K562 (cell line): ENCODE measurements at regions of chr6 and their contacts with region 1.

Region 1: GRCh38 chr6:159862103-159862502 is 28.7 kb upstream of the MAS1 start:
- DNase-seq: no peak
- ATAC-seq: no peak
- H3K4me3 ChIP-seq: no peak overlapping the region
- H3K27ac ChIP-seq: no peak overlapping the region
- H3K4me1 ChIP-seq: peaks cover 0 to 9% of the 10 kb centered on the region in 2 experiments; a peak in 1 of 5 replicates
- H3K27me3 ChIP-seq: peaks cover 8 to 21% of the 10 kb centered on the region in 2 experiments; a peak in 4 of 5 replicates
- CTCF ChIP-seq: no peak
- EP300 ChIP-seq: no peak
- POLR2A ChIP-seq: no peak
- RAD21 ChIP-seq: no peak

Region 2: DNA sequence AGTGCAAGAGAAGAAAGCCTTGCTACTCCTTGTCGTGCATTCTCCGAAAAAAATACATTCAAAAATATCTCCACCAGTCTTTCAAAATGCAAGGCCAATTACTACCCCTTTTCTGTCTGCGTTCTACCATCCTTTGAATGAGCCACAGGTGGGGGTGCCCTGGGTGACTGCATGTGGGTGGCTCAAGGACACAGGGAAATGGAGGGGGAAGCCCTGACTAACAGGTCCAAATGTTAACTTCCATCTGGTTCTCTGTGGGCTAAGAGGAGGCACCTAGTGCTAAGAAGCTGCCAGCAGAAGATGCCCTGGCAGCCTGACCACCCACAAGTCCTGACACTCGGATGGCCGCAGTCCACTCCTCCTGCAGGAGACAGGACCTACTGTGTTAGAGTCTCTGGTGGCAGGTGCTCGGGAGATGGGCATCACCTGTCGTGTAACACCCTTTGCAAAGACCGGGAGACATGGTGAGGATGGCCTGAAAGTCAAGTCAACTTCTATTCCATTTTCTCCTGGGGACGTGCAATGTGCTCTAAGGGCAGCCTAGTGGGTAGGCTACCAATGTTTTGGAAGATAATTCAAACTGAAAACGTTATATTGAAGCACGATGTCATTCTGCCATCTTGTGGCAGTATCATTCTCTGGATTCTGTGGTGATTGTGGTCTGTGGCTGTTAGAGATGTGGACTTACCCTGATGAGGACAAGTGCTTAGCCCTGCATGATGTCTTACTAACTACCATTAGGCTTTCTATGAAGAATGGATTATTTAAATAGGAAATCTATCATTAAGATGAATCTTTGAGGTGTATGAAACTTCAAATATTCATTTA is 79.4 kb after region 1 on chr6:
- CTCF ChIA-PET with region 1: interaction called, 8 read pairs
- POLR2A ChIA-PET with region 1: no interaction called
- in situ Hi-C with region 1: no loop called
- intact Hi-C with region 1: loop called (anchors 1 kb)
- DNase-seq: peak in 3 of 4 experiments; percentile 18 to 56 (median 25)
- ATAC-seq: peak; percentile 89
- H3K4me3 ChIP-seq: no peak overlapping the region
- H3K27ac ChIP-seq: no peak overlapping the region
- H3K4me1 ChIP-seq: no peaks in the 10 kb centered on the region; a peak in 1 of 5 replicates
- H3K27me3 ChIP-seq: peaks cover 12 to 24% of the 10 kb centered on the region in 2 experiments; a peak in 4 of 5 replicates
- CTCF ChIP-seq: peak; percentile 39 to 75 (median 43); a peak in 4 of 6 replicates
- EP300 ChIP-seq: no peak
- POLR2A ChIP-seq: no peak
- RAD21 ChIP-seq: peak; percentile 72 to 85

Region 3: DNA sequence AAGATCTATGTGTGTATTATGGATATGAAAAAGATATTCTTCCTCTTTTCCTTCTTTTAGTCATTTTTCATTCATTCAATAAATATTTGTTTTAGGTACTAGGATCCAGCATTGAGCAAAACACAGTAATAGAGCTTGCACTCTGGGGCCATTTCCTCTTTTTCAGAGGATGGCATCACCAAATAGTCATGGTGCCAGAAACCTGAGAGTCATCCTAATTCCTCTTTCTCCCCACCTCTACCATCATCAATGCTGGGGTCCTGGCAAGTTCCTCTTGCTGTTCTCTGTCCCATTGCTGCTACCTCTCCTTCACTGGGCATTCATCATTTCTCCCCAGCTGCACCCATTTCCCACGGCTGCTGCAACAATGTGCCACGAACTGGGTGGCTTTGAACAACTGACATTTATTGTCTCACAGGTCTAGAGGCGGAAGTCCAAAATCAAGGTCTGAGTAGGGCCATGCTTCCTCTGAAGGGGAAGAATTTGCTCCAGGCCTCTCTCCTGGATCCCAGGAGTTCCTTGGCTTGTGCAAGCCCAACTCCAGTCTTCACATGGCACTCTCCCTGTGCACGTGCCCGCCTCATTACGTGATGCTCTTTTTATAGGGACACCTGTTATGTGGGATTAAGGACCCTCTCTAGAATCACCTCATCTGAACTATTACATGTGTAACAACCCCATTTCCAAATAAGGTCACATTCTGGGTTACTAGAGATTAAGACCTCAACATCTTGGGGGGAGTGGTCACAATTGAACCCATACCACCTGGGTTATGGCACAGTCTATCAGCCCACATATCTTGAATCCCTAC is 97.3 kb after region 1 on chr6:
- CTCF ChIA-PET with region 1: no interaction called
- POLR2A ChIA-PET with region 1: no interaction called
- in situ Hi-C with region 1: no loop called
- intact Hi-C with region 1: no loop called
- DNase-seq: no peak
- ATAC-seq: no peak; the same call in 2 of the 3 replicates
- H3K4me3 ChIP-seq: no peak overlapping the region
- H3K27ac ChIP-seq: peak overlapping the region; percentile 13; the same call in 1 of the 3 replicates
- H3K4me1 ChIP-seq: peaks cover 0 to 10% of the 10 kb centered on the region in 2 experiments; a peak in 3 of 5 replicates
- H3K27me3 ChIP-seq: no peaks in the 10 kb centered on the region; a peak in 1 of 5 replicates
- CTCF ChIP-seq: no peak
- EP300 ChIP-seq: no peak
- POLR2A ChIP-seq: no peak
- RAD21 ChIP-seq: no peak

Region 4: GRCh38 chr6:160102956-160103824 is 241.1 kb after region 1 on chr6:
- CTCF ChIA-PET with region 1: no interaction called
- POLR2A ChIA-PET with region 1: no interaction called
- in situ Hi-C with region 1: no loop called
- intact Hi-C with region 1: loop called (anchors 5 kb)
- DNase-seq: peak; percentile 39 to 59 (median 47)
- ATAC-seq: peak; percentile 30
- H3K4me3 ChIP-seq: no peak overlapping the region
- H3K27ac ChIP-seq: no peak overlapping the region
- H3K4me1 ChIP-seq: peaks cover 32% of the 10 kb centered on the region in 2 experiments
- H3K27me3 ChIP-seq: no peaks in the 10 kb centered on the region; a peak in 1 of 5 replicates
- CTCF ChIP-seq: peak; percentile 54 to 75 (median 62)
- EP300 ChIP-seq: no peak
- POLR2A ChIP-seq: no peak
- RAD21 ChIP-seq: peak in 1 of 2 experiments; percentile 63; a peak in 3 of 4 replicates

Region 5: GRCh38 chr6:160137989-160138835 is 276.1 kb after region 1 on chr6:
- CTCF ChIA-PET with region 1: interaction called, 8 read pairs
- POLR2A ChIA-PET with region 1: interaction called, 3 read pairs
- in situ Hi-C with region 1: no loop called
- intact Hi-C with region 1: loop called (anchors 5 kb)
- DNase-seq: peak; percentile 60 to 73 (median 64)
- ATAC-seq: peak; percentile 69
- H3K4me3 ChIP-seq: no peak overlapping the region
- H3K27ac ChIP-seq: no peak overlapping the region
- H3K4me1 ChIP-seq: peaks cover 0 to 7% of the 10 kb centered on the region in 2 experiments; a peak in 1 of 5 replicates
- H3K27me3 ChIP-seq: peaks cover 27 to 57% of the 10 kb centered on the region in 2 experiments
- CTCF ChIP-seq: peak; percentile 74 to 94 (median 85)
- EP300 ChIP-seq: no peak
- POLR2A ChIP-seq: no peak
- RAD21 ChIP-seq: peak; percentile 89 to 93

Region 6: GRCh38 chr6:160221423-160221822 is 359.3 kb after region 1 on chr6:
- CTCF ChIA-PET with region 1: no interaction called
- POLR2A ChIA-PET with region 1: no interaction called
- in situ Hi-C with region 1: no loop called
- intact Hi-C with region 1: no loop called
- DNase-seq: no peak
- ATAC-seq: no peak
- H3K4me3 ChIP-seq: no peak overlapping the region
- H3K27ac ChIP-seq: no peak overlapping the region
- H3K4me1 ChIP-seq: no peaks in the 10 kb centered on the region
- H3K27me3 ChIP-seq: no peaks in the 10 kb centered on the region; a peak in 1 of 5 replicates
- CTCF ChIP-seq: peak in 1 of 3 experiments; percentile 36; a peak in 2 of 6 replicates
- EP300 ChIP-seq: no peak
- POLR2A ChIP-seq: no peak
- RAD21 ChIP-seq: peak; percentile 20 to 47; a peak in 3 of 4 replicates

Region 7: GRCh38 chr6:160261991-160262680 is 400.0 kb after region 1 on chr6:
- CTCF ChIA-PET with region 1: no interaction called
- POLR2A ChIA-PET with region 1: no interaction called
- in situ Hi-C with region 1: no loop called
- intact Hi-C with region 1: loop called (anchors 10 kb)
- DNase-seq: peak; percentile 46 to 70 (median 56)
- ATAC-seq: peak; percentile 96
- H3K4me3 ChIP-seq: no peak overlapping the region
- H3K27ac ChIP-seq: no peak overlapping the region
- H3K4me1 ChIP-seq: peaks cover 0 to 6% of the 10 kb centered on the region in 2 experiments; a peak in 2 of 5 replicates
- H3K27me3 ChIP-seq: peaks cover 23 to 41% of the 10 kb centered on the region in 2 experiments
- CTCF ChIP-seq: peak; percentile 48 to 53 (median 53); a peak in 5 of 6 replicates
- EP300 ChIP-seq: no peak
- POLR2A ChIP-seq: no peak
- RAD21 ChIP-seq: peak; percentile 24 to 28; a peak in 1 of 4 replicates

Region 8: DNA sequence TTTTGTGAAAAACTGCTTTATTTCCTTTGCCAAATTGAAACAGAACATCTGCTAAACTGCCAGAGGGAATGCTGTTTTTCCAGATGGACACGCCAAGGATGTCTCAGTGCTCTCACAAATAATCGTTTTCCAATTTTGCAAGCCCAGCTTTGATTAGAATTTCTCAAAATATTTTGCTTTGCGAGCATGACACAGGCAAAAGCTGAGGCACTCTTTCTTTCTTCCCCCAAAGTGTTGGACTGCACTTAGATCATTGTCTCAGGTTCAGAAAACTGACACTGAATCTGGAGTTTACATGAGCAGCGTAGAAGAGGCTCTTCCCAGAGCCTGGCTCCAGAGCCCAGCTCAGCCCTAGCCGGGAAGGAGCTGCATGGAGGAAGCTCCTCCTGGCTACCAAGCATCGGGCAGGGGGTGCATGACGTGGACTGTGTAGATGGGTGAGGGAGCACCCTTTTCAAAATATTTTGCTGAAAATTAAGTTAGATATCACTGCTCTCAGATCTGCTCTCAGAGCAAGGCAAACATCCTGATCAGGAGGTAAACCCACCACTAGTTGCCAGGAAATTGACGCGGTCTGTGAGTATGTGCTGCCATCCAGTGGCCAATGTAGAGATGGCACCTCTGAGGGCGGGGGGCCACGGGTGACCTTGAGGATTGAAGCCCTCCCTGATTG is 593.6 kb after region 1 on chr6:
- CTCF ChIA-PET with region 1: interaction called, 19 read pairs
- POLR2A ChIA-PET with region 1: no interaction called
- in situ Hi-C with region 1: loop called (anchors 10 kb)
- intact Hi-C with region 1: loop called (anchors 1 kb)
- DNase-seq: peak; percentile 69 to 84 (median 81)
- ATAC-seq: peak; percentile 94
- H3K4me3 ChIP-seq: no peak overlapping the region
- H3K27ac ChIP-seq: no peak overlapping the region
- H3K4me1 ChIP-seq: no peaks in the 10 kb centered on the region
- H3K27me3 ChIP-seq: peaks cover 10 to 18% of the 10 kb centered on the region in 2 experiments
- CTCF ChIP-seq: peak; percentile 92 to 97 (median 96)
- EP300 ChIP-seq: no peak
- POLR2A ChIP-seq: no peak
- RAD21 ChIP-seq: peak; percentile 97

Region 9: DNA sequence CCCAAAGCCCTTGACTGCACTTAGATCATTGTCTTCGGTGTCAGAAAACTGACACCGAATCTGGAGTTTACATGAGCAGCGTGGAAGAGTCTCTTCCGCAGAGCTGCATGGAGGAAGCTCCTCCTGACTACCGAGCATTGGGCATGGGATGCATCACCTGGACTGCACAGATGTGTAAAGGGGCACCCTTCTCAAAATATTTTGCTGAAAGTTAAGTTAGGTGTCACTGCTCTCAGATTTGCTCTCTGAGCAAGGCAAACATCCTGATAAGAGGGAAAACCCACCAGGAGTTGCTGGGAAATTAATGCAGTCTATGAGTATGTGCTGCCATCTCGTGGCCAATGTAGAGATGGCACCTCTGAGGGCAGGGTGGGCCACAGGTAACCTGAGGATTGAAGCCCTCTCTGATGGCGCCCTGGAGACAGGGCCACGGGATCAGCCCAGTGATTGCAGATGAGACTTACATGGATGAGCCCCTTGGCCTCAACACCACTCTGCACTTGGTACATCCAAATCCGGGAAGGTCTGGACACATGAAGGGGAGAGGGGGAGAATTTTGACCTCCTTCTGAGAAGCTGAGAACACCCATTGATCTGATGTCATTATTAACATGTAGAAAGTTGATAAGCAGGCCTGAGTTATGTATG is 672.1 kb after region 1 on chr6:
- CTCF ChIA-PET with region 1: no interaction called
- POLR2A ChIA-PET with region 1: no interaction called
- in situ Hi-C with region 1: no loop called
- intact Hi-C with region 1: loop called (anchors 2 kb)
- DNase-seq: peak; percentile 68 to 76 (median 70)
- ATAC-seq: peak; percentile 93
- H3K4me3 ChIP-seq: no peak overlapping the region
- H3K27ac ChIP-seq: no peak overlapping the region
- H3K4me1 ChIP-seq: no peaks in the 10 kb centered on the region
- H3K27me3 ChIP-seq: peaks cover 2 to 10% of the 10 kb centered on the region in 2 experiments; a peak in 3 of 5 replicates
- CTCF ChIP-seq: peak; percentile 79 to 94 (median 83)
- EP300 ChIP-seq: no peak
- POLR2A ChIP-seq: no peak
- RAD21 ChIP-seq: peak; percentile 89 to 94